IMR-90 (cell line): ENCODE measurements at regions of chr18 and their contacts with region 1.

Region 1: DNA sequence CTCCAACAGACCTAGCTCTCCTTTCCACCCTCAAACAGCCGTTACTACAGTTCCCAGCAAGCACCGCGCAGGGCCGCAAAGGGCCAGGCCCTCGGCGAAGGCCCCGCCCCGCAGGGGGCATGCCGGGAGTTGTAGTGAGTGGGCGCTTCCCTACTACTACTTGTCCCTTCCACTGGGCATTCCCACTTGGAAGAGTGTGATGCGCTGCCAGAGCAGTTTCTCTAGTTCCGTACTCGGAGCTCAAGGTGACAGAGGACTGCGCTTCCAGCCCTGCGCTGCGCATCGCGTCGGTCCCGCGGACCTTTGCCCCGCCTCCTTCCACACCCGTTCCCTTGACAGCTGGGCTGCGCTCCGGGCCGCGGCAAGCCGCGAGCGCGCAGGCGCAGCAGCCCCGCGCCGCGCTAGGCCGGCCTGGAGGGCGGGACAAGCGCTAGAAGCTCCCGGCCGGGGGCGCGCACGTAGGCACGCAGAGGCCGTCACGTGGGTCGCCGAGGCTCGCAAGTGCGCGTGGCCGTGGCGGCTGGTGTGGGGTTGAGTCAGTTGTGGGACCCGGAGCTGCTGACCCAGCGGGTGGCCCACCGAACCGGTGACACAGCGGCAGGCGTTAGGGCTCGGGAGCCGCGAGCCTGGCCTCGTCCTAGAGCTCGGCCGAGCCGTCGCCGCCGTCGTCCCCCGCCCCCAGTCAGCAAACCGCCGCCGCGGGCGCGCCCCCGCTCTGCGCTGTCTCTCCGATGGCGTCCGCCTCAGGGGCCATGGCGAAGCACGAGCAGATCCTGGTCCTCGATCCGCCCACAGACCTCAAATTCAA is at the start of gene VAPA:
- DNase-seq: peak; percentile 96
- ATAC-seq: peak; percentile 92
- H3K4me3 ChIP-seq: peak within 1 kb of the TSS; percentile 87
- H3K27ac ChIP-seq: peak within 1 kb of the TSS; percentile 96
- H3K4me1 ChIP-seq: peaks cover under 1% of the 10 kb centered on the region; the same call in 1 of the 2 replicates
- H3K27me3 ChIP-seq: no peaks in the 10 kb centered on the region
- CTCF ChIP-seq: no peak
- POLR2A ChIP-seq: peak; percentile 92
- RAD21 ChIP-seq: no peak
- total RNA-seq, gene VAPA: 206 and 273 TPM in 2 replicates

Region 2: GRCh38 chr18:9827641-9828505 is 85.9 kb before region 1 on chr18:
- CTCF ChIA-PET with region 1: no interaction called
- POLR2A ChIA-PET with region 1: no interaction called
- dilution Hi-C with region 1: no loop called
- in situ Hi-C with region 1: no loop called
- intact Hi-C with region 1: loop called (anchors 5 kb)
- DNase-seq: peak; percentile 100
- ATAC-seq: peak; percentile 80
- H3K4me3 ChIP-seq: no peak overlapping the region
- H3K27ac ChIP-seq: peak overlapping the region; percentile 90
- H3K4me1 ChIP-seq: peaks cover 32% of the 10 kb centered on the region
- H3K27me3 ChIP-seq: no peaks in the 10 kb centered on the region
- CTCF ChIP-seq: no peak
- POLR2A ChIP-seq: no peak
- RAD21 ChIP-seq: peak; percentile 25